ENCODE measurements at regions of chr1 and their contacts with region 1.

Region 1: DNA sequence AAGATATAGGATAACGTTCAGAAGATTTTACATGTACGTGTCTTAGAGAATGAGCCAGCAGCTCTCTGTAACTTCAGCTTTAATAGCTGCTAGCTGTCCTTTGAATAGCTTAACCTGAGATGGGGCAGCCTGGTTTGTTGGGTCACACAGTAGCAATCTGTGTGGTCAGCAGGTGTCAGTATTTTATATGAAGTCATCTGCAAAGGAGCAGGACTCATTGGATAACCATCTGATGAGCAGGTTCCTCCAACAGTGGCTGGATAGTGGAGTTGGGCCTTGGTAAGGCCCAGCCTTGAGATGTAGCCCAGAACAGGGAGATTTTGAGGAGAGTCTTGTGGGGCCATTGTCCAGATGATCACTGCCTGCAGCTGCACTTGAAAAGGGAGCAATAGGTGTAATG is 6.4 kb downstream of the GSTM5 start:
- DNase-seq: no peak
- ATAC-seq: peak; percentile 47

Region 2: GRCh38 chr1:109667452-109668122 is 50.9 kb before region 1 on chr1 and contains the start of gene GSTM2:
- intact Hi-C with region 1: loop called (anchors 5 kb)
- DNase-seq: peak; percentile 97
- ATAC-seq: peak; percentile 100
- total RNA-seq, gene GSTM2: 77.4 TPM

Measured in Right ventricle myocardium inferior (tissue), 1 donor.